ENCODE measurements at regions of chr1 and their contacts with region 1.

Region 1: GRCh38 chr1:224851210-224851847 is 78.1 kb upstream of the DNAH14 start:
- DNase-seq: peak; percentile 63
- H3K4me3 ChIP-seq: no peak overlapping the region
- H3K27ac ChIP-seq: no peak overlapping the region
- H3K4me1 ChIP-seq: no peaks in the 10 kb centered on the region
- H3K27me3 ChIP-seq: no peaks in the 10 kb centered on the region
- CTCF ChIP-seq: peak; percentile 89

Region 2: GRCh38 chr1:224513787-224514209 is 337.5 kb before region 1 on chr1:
- CTCF ChIA-PET with region 1: interaction called, 4 read pairs
- POLR2A ChIA-PET with region 1: no interaction called
- intact Hi-C with region 1: loop called (anchors 1 kb)
- DNase-seq: peak; percentile 91
- H3K4me3 ChIP-seq: no peak overlapping the region
- H3K27ac ChIP-seq: no peak overlapping the region
- H3K4me1 ChIP-seq: no peaks in the 10 kb centered on the region
- H3K27me3 ChIP-seq: no peaks in the 10 kb centered on the region
- CTCF ChIP-seq: peak; percentile 95

Region 3: DNA sequence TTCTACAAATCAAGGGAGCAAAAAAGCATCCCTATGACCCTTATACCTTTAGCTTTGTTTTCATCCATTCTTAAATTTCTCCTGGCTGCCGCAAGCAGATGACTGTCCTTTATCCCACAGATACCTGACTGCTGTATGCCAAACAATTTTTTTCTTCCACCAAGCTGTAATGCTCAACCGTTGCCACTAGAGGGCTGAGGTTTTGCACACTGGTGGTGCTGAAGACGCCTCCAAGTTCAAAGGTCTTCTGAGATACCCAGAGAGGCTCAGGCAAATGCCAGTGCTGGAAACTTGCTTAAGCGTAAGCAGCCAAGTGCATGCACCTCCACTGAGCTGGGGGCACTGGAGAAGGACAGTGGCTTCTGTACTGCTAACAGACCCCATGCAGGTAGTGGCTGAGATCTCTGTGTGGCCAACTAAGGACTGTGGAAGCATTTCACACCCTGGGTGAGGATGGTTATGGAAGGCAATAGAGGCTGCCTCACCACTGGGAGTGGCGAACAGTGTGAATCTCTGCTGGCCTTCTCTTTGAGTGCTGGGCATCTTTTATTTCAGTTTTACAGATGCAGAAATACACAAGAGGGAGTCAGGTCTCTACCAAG is 206.7 kb before region 1 on chr1:
- CTCF ChIA-PET with region 1: interaction called, 3 read pairs
- POLR2A ChIA-PET with region 1: no interaction called
- intact Hi-C with region 1: loop called (anchors 5 kb)
- DNase-seq: peak; percentile 70
- H3K4me3 ChIP-seq: no peak overlapping the region
- H3K27ac ChIP-seq: no peak overlapping the region
- H3K4me1 ChIP-seq: no peaks in the 10 kb centered on the region
- H3K27me3 ChIP-seq: no peaks in the 10 kb centered on the region
- CTCF ChIP-seq: peak; percentile 92

Region 4: GRCh38 chr1:224700915-224701531 is 150.3 kb before region 1 on chr1:
- CTCF ChIA-PET with region 1: interaction called, 17 read pairs
- POLR2A ChIA-PET with region 1: no interaction called
- intact Hi-C with region 1: loop called (anchors 1 kb)
- DNase-seq: peak; percentile 67
- H3K4me3 ChIP-seq: no peak overlapping the region
- H3K27ac ChIP-seq: no peak overlapping the region
- H3K4me1 ChIP-seq: peaks cover 6% of the 10 kb centered on the region
- H3K27me3 ChIP-seq: no peaks in the 10 kb centered on the region
- CTCF ChIP-seq: peak; percentile 70

Region 5: GRCh38 chr1:224801761-224802490 is 49.4 kb before region 1 on chr1:
- CTCF ChIA-PET with region 1: no interaction called
- POLR2A ChIA-PET with region 1: no interaction called
- intact Hi-C with region 1: no loop called
- DNase-seq: no peak
- H3K4me3 ChIP-seq: no peak overlapping the region
- H3K27ac ChIP-seq: no peak overlapping the region
- H3K4me1 ChIP-seq: no peaks in the 10 kb centered on the region
- H3K27me3 ChIP-seq: no peaks in the 10 kb centered on the region
- CTCF ChIP-seq: no peak

Region 6: DNA sequence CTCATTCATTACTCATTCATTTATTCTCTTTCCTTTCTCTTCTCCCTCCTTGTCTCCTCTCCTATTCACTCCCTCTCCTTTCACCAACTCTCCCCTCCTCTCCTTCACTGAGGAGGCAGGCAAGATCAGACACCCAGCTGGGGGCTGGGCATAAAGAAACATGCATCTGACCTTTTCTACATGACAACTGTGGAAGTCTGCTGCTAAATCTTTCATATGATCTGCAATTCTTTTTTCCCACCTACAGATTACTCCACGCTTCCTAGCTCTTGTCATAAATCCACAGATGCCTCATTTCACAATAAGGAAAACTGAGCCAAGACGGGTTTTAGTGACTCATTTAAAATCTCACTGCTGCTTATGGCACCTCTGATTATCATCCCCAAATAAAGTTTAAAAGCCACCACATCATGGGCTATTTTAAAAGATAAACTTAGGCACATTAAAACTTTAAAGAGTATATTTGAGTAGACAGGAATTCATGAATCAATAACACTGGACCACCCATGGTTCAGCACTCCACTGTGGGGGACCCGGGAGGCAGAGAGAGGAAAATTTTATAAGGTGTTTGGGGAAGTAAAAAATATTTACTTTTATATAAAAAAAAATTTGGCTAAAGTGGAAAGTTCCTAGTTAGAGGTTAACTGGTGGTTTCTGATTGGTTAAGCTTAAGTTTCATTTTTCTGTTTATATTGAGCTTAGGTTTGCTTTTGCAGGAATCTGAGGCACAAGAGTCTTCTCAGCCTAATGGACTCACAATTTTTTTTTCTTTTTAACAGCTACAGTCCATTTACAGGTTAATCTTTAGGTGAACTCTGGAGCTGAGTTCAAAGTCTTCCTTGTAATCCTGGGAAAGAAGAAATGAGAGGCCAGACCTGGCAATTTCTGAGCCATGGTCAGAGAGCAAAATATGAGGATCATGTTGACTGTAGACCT is 22.4 kb after region 1 on chr1:
- CTCF ChIA-PET with region 1: no interaction called
- POLR2A ChIA-PET with region 1: no interaction called
- intact Hi-C with region 1: no loop called
- DNase-seq: peak; percentile 26
- H3K4me3 ChIP-seq: no peak overlapping the region
- H3K27ac ChIP-seq: no peak overlapping the region
- H3K4me1 ChIP-seq: peaks cover 8% of the 10 kb centered on the region
- H3K27me3 ChIP-seq: peaks cover 13% of the 10 kb centered on the region
- CTCF ChIP-seq: no peak

Region 7: GRCh38 chr1:224922404-224923164 is 71.3 kb after region 1 on chr1:
- CTCF ChIA-PET with region 1: interaction called, 16 read pairs
- POLR2A ChIA-PET with region 1: no interaction called
- intact Hi-C with region 1: no loop called
- DNase-seq: peak; percentile 47
- H3K4me3 ChIP-seq: no peak overlapping the region
- H3K27ac ChIP-seq: no peak overlapping the region
- H3K4me1 ChIP-seq: no peaks in the 10 kb centered on the region
- H3K27me3 ChIP-seq: no peaks in the 10 kb centered on the region
- CTCF ChIP-seq: peak; percentile 71